Esophagus squamous epithelium (tissue), 5 donors: ENCODE measurements at regions of chr11 and their contacts with region 1.

Region 1: DNA sequence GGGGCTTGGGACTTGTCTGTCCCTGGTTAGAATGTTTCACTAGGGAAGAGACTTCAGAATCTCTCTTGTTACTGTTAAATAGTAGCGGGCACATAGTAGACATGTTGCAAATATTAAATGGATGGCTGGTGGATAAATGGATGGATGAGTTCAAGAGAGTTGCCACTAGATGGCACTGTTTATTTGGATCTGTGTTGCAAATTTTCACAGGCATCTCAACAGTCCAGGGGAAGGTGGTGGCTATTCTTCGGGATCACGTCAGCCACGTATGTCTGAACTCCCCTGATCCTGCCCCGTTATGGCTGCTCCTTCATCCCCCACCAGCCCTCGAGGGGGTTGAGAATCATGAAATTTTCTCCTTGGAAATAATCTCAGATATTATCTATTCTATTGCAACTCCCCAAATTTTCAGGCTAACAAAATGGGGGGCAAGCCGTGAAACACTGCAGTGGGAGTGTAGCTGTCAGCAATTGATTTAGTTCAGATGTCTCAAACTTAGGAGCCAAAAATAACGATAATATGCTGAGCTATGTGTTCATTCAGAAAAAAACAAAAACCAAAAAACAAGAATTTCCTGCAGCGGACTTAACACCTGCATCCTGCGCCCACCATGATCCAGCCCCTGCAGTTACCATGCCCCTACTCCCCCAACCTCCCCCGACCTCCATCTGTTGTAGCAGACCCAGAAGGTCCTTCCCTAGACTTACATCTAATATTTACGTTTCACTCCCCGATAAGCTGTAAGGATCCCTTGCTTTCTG is 29.1 kb upstream of the BIRC3 start:
- DNase-seq: no peak
- H3K4me3 ChIP-seq: peak overlapping the region in 2 of 4 donors; percentile 19 to 48
- H3K27ac ChIP-seq: no peak overlapping the region
- H3K4me1 ChIP-seq: peaks cover 5 to 28% (median 13%) of the 10 kb centered on the region in 3 donors
- H3K27me3 ChIP-seq: no peaks in the 10 kb centered on the region
- CTCF ChIP-seq: peak; percentile 65 to 84 (median 75)
- POLR2A ChIP-seq: no peak

Region 2: GRCh38 chr11:102341844-102342318 is 53.7 kb after region 1 on chr11:
- intact Hi-C with region 1: loop called (anchors 5 kb)
- DNase-seq: no peak
- H3K4me3 ChIP-seq: no peak overlapping the region
- H3K27ac ChIP-seq: no peak overlapping the region
- H3K4me1 ChIP-seq: peaks cover 0 to 17% (median 2%) of the 10 kb centered on the region in 3 donors
- H3K27me3 ChIP-seq: no peaks in the 10 kb centered on the region
- CTCF ChIP-seq: peak; percentile 68 to 82 (median 72)
- POLR2A ChIP-seq: no peak